Prostate gland (tissue), 2 donors: ENCODE measurements at regions of chr19 and their contacts with region 1.

Region 1: GRCh38 chr19:2750808-2751443 is 11.1 kb upstream of the SLC39A3 start:
- DNase-seq: no peak
- H3K4me3 ChIP-seq: no peak overlapping the region
- H3K27ac ChIP-seq: no peak overlapping the region
- H3K4me1 ChIP-seq: no peaks in the 10 kb centered on the region
- H3K27me3 ChIP-seq: no peaks in the 10 kb centered on the region
- CTCF ChIP-seq: no peak
- POLR2A ChIP-seq: no peak

Region 2: DNA sequence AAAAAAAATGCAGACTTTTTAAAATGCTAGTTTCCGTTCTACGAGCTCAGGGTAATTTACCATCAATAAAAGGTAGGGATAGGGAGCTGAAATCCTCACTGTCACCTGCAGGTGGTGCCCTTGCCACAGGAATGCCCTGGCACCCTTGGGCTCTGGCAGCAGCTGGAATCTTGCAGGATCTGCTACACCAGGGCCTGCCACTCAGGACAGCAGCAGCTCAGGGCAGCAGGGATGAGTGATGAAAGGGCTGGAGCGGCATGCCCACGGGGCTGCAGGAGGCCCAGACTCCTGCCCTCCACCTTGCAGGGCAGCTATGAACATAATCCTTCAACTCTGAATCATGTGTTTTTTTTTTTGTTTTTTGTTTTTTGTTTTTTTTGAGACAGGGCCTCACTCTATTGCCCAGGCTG is 102.4 kb before region 1 on chr19:
- intact Hi-C with region 1: loop called (anchors 2 kb)
- DNase-seq: peak; percentile 72
- H3K4me3 ChIP-seq: no peak overlapping the region
- H3K27ac ChIP-seq: no peak overlapping the region
- H3K4me1 ChIP-seq: no peaks in the 10 kb centered on the region
- H3K27me3 ChIP-seq: no peaks in the 10 kb centered on the region
- CTCF ChIP-seq: peak in 3 of 4 experiments; percentile 78 to 93 (median 90)
- POLR2A ChIP-seq: no peak